B cell (primary cell): ENCODE measurements at regions of chr17 and their contacts with region 1.

Region 1: GRCh38 chr17:7767405-7768021 is 50.0 kb downstream of the DNAH2 start:
- DNase-seq: no peak
- ATAC-seq: no peak
- H3K4me3 ChIP-seq: no peak overlapping the region
- H3K4me3 Mint-ChIP-seq: no peak overlapping the region
- H3K27ac ChIP-seq: no peak overlapping the region
- H3K27ac Mint-ChIP-seq: no peak overlapping the region
- H3K4me1 ChIP-seq: no peaks in the 10 kb centered on the region
- H3K4me1 Mint-ChIP-seq: no peaks in the 10 kb centered on the region
- H3K27me3 ChIP-seq: no peaks in the 10 kb centered on the region
- H3K27me3 Mint-ChIP-seq: peaks cover 25% of the 10 kb centered on the region
- CTCF ChIP-seq: no peak

Region 2: GRCh38 chr17:7716901-7717755 is 50.4 kb before region 1 on chr17 and contains the start of gene DNAH2:
- CTCF ChIA-PET with region 1: no interaction called
- POLR2A ChIA-PET with region 1: interaction called, 13 read pairs
- intact Hi-C with region 1: no loop called
- DNase-seq: peak; percentile 57
- ATAC-seq: peak; percentile 80
- H3K4me3 ChIP-seq: peak within 1 kb of the TSS in 4 of 5 experiments; percentile 28 to 63 (median 43)
- H3K4me3 Mint-ChIP-seq: peak within 1 kb of the TSS; percentile 83
- H3K27ac ChIP-seq: no peak within 1 kb of the TSS
- H3K27ac Mint-ChIP-seq: no peak within 1 kb of the TSS
- H3K4me1 ChIP-seq: peaks cover 20 to 26% of the 10 kb centered on the region in 2 donors
- H3K4me1 Mint-ChIP-seq: peaks cover 24% of the 10 kb centered on the region
- H3K27me3 ChIP-seq: peaks cover 0 to 80% (median 42%) of the 10 kb centered on the region in 4 experiments
- H3K27me3 Mint-ChIP-seq: peaks cover 70% of the 10 kb centered on the region
- CTCF ChIP-seq: no peak
- total RNA-seq, gene DNAH2: not detected in 2 replicates